Pancreas (tissue), 10 donors: ENCODE measurements at regions of chr11 and their contacts with region 1.

Region 1: GRCh38 chr11:27485930-27486773 is 13.6 kb upstream of the LGR4 start:
- DNase-seq: peak in 1 of 6 donors; percentile 54
- ATAC-seq: peak; percentile 67 to 90 (median 87)
- H3K4me3 ChIP-seq: no peak overlapping the region
- H3K27ac ChIP-seq: no peak overlapping the region
- H3K4me1 ChIP-seq: peaks cover 0 to 6% (median 0%) of the 10 kb centered on the region in 3 donors
- H3K27me3 ChIP-seq: no peaks in the 10 kb centered on the region
- CTCF ChIP-seq: peak; percentile 32 to 89 (median 78)

Region 2: GRCh38 chr11:26753723-26754504 is 732.2 kb before region 1 on chr11:
- intact Hi-C with region 1: loop called in 1 of 3 experiments (anchors 10 kb)
- DNase-seq: peak in 3 of 6 donors; percentile 12 to 45 (median 17)
- ATAC-seq: peak; percentile 69 to 88 (median 86)
- H3K4me3 ChIP-seq: no peak overlapping the region
- H3K27ac ChIP-seq: no peak overlapping the region
- H3K4me1 ChIP-seq: no peaks in the 10 kb centered on the region
- H3K27me3 ChIP-seq: no peaks in the 10 kb centered on the region
- CTCF ChIP-seq: peak; percentile 41 to 61 (median 45)

Region 3: DNA sequence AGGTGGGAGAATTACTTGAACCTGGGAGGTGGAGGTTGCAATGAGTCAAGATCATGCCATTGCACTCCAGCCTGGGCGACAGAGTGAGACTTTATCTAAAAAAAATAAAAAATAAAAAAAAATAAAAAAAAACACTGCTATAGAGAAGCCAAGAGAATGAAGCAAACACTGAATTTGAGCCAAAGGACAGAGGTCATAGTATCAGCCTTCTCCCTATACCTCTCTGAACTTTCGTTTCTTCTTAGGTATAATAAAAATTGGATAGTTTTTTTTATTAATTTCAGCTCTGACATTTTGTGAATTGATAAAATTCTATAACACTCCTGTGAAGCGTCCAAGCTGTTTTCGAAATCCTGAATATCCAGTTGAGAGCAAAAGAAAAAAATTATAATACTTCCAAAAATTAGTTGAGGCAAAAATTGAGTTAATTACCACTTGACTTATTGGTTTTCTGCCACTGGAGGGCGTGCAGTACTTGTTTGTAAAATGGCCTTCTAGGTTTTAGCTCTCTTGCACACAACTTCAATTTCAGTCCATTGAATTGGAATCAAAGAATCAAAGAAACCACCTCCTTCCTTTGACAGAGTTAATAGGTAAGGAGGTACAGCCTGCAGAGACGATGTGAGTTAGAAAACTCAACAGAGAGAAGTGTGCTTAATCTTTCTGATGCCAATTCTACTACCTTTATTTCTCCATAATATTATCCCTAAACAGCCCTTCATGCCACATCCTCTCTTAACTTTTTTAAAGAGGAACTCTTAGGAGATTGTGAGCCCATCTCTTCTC is 302.3 kb before region 1 on chr11:
- intact Hi-C with region 1: loop called (anchors 5 kb)
- DNase-seq: peak in 4 of 6 donors; percentile 36 to 65 (median 40)
- ATAC-seq: peak; percentile 71 to 82 (median 76)
- H3K4me3 ChIP-seq: no peak overlapping the region
- H3K27ac ChIP-seq: no peak overlapping the region
- H3K4me1 ChIP-seq: peaks cover 11 to 20% (median 15%) of the 10 kb centered on the region in 3 donors
- H3K27me3 ChIP-seq: no peaks in the 10 kb centered on the region
- CTCF ChIP-seq: peak; percentile 37 to 58 (median 46)

Region 4: DNA sequence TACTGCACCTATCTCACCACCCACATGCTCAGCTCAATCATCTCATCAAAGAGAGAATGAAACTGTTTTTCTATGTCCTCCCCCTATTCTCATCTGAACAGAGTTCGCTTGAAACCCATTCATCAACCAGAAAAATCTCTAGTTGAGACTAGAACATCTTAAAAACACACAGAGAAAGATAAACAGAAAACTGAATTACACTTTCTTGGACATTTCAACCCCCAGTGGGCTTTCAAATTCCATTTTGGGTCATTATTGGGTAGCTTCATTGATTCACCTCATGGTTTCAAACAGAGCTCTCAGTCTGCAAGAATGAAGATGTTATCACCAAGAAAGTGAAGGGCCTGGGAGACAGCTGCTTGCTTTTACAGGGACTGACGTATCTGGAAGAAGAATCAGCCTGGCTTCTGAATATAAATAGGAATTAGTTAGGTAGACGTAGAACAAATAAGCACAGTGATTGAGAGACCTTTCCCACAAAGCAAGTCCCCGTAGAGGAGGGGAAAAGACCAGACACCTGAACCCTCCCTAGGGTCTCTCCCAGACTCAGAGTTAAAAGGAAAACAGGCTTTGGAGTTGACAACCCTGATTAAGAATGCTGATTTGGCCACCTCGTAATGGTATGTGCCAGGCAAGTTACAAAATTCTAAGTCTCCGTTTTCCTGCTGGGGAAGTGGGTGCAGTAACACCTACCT is 289.8 kb before region 1 on chr11:
- intact Hi-C with region 1: loop called in 1 of 3 experiments (anchors 5 kb)
- DNase-seq: no peak
- ATAC-seq: no peak
- H3K4me3 ChIP-seq: no peak overlapping the region
- H3K27ac ChIP-seq: no peak overlapping the region
- H3K4me1 ChIP-seq: peaks cover 0 to 9% (median 5%) of the 10 kb centered on the region in 3 donors
- H3K27me3 ChIP-seq: no peaks in the 10 kb centered on the region
- CTCF ChIP-seq: no peak

Region 5: GRCh38 chr11:27592098-27592780 is 106.1 kb after region 1 on chr11:
- intact Hi-C with region 1: no loop called
- DNase-seq: no peak
- ATAC-seq: no peak
- H3K4me3 ChIP-seq: no peak overlapping the region
- H3K27ac ChIP-seq: no peak overlapping the region
- H3K4me1 ChIP-seq: no peaks in the 10 kb centered on the region
- H3K27me3 ChIP-seq: no peaks in the 10 kb centered on the region
- CTCF ChIP-seq: no peak